T-cell (primary cell): ENCODE measurements at regions of chr7 and their contacts with region 1.

Region 1: DNA sequence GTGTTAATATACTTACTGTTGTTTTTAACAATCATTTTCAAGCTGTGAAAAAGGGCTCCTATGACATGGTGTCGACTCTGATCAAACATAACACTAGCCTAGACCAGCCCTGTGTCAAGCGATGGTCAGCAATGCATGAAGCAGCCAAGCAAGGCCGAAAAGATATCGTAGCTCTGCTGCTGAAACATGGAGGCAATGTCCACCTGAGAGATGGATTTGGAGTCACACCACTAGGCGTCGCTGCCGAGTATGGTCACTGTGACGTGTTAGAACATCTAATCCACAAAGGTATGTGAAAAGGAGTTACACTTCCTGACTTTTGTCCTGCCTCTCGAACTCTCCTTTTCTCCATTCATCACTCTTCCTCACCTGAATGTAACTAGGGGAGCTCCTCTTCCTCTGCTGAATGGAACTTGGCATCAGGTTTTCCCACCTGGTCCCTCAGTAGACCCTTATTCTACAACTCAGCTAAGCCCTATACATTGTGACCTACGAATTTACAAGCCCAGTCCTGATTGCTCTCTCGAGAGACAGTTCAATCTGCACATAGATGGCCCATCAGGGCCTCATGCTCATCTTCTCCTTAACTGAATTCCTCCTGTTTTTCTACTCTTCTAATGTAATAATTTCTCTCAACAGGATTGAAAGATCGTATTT is 23.0 kb downstream of the ASB15 start:
- DNase-seq: peak in 33 of 35 experiments; percentile 3 to 69 (median 39)
- ATAC-seq: peak in 2 of 4 experiments; percentile 44 to 50
- H3K4me3 ChIP-seq: no peak overlapping the region
- H3K4me3 Mint-ChIP-seq: no peak overlapping the region
- H3K27ac ChIP-seq: no peak overlapping the region
- H3K27ac Mint-ChIP-seq: no peak overlapping the region
- H3K4me1 ChIP-seq: no peaks in the 10 kb centered on the region
- H3K4me1 Mint-ChIP-seq: peaks cover 0 to 3% (median 0%) of the 10 kb centered on the region in 3 donors
- H3K27me3 ChIP-seq: no peaks in the 10 kb centered on the region
- H3K27me3 Mint-ChIP-seq: peaks cover 3 to 24% of the 10 kb centered on the region in 2 donors

Region 2: GRCh38 chr7:123635551-123636359 is 11.1 kb after region 1 on chr7:
- CTCF ChIA-PET with region 1: interaction called, 4 to 16 read pairs
- POLR2A ChIA-PET with region 1: no interaction called
- DNase-seq: peak in 1 of 35 experiments; percentile 24
- ATAC-seq: no peak
- H3K4me3 ChIP-seq: no peak overlapping the region
- H3K4me3 Mint-ChIP-seq: no peak overlapping the region
- H3K27ac ChIP-seq: no peak overlapping the region
- H3K27ac Mint-ChIP-seq: no peak overlapping the region
- H3K4me1 ChIP-seq: no peaks in the 10 kb centered on the region
- H3K4me1 Mint-ChIP-seq: no peaks in the 10 kb centered on the region
- H3K27me3 ChIP-seq: no peaks in the 10 kb centered on the region
- H3K27me3 Mint-ChIP-seq: peaks cover 18 to 22% of the 10 kb centered on the region in 2 donors